ENCODE measurements at regions of chr18 and their contacts with region 1.

Region 1: DNA sequence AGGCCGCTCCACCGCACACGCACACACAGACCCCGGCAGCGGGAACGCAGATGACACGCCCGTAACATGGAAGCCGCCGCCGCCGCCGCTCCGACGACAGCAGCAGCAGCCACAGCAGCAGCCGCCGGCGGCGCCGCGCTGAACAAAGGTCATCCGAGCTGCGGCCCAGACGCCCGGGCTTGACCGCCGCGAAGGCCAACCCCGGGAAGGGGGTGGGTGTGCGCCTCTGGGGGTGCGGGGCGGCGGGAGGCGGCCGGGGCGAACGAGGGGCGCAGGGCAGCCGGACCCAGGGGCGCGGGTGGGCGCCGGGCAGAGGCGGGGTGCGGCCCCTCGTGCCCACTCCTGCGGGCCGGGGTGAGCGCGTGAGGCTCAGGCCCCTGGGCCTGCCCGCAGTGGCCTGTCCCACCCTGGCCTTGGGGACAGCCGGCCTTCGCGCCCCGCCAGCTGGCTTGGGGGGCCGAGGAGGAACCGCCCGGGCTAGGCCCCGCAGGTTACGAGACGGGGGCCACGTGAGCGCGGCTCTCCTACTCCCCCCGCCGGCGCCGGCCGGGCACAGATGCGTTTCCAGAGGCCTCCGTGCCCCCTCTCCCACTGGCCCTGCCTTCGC is 1.0 kb upstream of the ZNF532 start:
- DNase-seq: peak; percentile 46
- ATAC-seq: peak; percentile 4
- H3K4me3 Mint-ChIP-seq: peak overlapping the region; percentile 62
- H3K27ac Mint-ChIP-seq: no peak overlapping the region
- H3K4me1 Mint-ChIP-seq: peaks cover 86% of the 10 kb centered on the region
- H3K27me3 Mint-ChIP-seq: no peaks in the 10 kb centered on the region
- CTCF ChIP-seq: no peak

Region 2: DNA sequence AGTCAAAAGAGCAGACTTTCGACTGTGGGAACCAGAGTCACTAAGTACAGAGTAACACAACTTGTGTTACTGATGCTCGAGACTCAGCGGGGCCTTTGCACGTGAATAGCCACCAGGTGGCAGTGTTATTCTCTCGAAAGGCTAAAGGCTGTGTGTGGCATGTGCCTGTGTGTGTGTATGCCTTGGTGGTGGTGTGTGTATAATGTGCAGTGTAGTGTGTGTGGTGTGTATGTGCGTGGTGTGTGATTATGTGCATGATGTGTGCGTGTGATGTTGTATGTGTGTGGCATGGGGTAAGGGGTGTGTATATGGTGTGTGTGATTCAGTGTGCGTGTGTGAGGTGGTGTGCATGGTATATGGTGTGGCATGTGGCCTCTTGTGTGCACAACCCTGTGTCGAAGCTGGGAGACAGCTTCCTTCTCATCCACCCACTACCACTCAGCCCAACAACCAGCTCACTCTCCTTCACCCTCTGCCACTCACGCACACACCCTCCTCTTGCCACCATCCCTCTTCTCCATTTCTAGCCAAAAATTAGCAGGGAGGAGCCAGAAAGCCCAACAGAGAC is 81.9 kb before region 1 on chr18:
- CTCF ChIA-PET with region 1: interaction called, 12 read pairs
- POLR2A ChIA-PET with region 1: interaction called, 6 read pairs
- DNase-seq: peak; percentile 86
- ATAC-seq: peak; percentile 78
- H3K4me3 Mint-ChIP-seq: no peak overlapping the region
- H3K27ac Mint-ChIP-seq: no peak overlapping the region
- H3K4me1 Mint-ChIP-seq: peaks cover 32% of the 10 kb centered on the region
- H3K27me3 Mint-ChIP-seq: no peaks in the 10 kb centered on the region; the same call in 1 of the 2 replicates
- CTCF ChIP-seq: peak; percentile 86

Region 3: GRCh38 chr18:58847383-58848071 is 16.1 kb before region 1 on chr18:
- CTCF ChIA-PET with region 1: interaction called, 19 read pairs
- POLR2A ChIA-PET with region 1: interaction called, 45 read pairs
- DNase-seq: peak; percentile 96
- ATAC-seq: peak; percentile 72
- H3K4me3 Mint-ChIP-seq: peak overlapping the region; percentile 56
- H3K27ac Mint-ChIP-seq: peak overlapping the region; percentile 99
- H3K4me1 Mint-ChIP-seq: peaks cover 91% of the 10 kb centered on the region
- H3K27me3 Mint-ChIP-seq: no peaks in the 10 kb centered on the region
- CTCF ChIP-seq: no peak

Region 4: DNA sequence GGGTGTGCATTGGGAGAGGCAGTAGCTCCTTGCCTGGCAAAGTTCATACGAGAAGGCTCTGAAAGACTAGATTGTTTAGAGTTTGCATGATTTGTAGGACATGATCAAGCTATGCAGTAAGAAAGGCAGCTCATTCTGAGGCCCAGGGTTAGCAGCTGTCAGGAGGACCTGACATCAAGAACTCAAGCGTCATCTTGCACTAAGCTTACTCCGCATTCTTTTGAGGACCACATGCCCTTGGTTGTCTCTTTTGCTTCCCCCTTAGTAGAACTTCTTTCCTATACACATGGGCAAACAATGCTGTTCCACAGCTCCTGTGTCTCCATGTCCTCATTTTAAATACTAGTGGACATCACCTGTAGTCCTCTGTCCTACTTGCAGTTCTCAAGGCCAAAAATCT is 15.0 kb after region 1 on chr18:
- CTCF ChIA-PET with region 1: interaction called, 3 read pairs
- POLR2A ChIA-PET with region 1: interaction called, 14 read pairs
- DNase-seq: no peak
- ATAC-seq: no peak
- H3K4me3 Mint-ChIP-seq: no peak overlapping the region
- H3K27ac Mint-ChIP-seq: peak overlapping the region; percentile 89; the same call in 1 of the 2 replicates
- H3K4me1 Mint-ChIP-seq: peaks cover 74% of the 10 kb centered on the region
- H3K27me3 Mint-ChIP-seq: no peaks in the 10 kb centered on the region
- CTCF ChIP-seq: no peak

Measured in WTC11 (cell line).